ENCODE measurements at regions of chr7 and their contacts with region 1.

Region 1: GRCh38 chr7:66033471-66034385 is 41.9 kb upstream of the ASL start:
- DNase-seq: no peak
- ATAC-seq: no peak
- H3K4me3 ChIP-seq: no peak overlapping the region
- H3K27ac ChIP-seq: no peak overlapping the region
- H3K4me1 ChIP-seq: peaks cover 0 to 4% of the 10 kb centered on the region in 2 experiments; a peak in 1 of 4 replicates
- H3K27me3 ChIP-seq: no peaks in the 10 kb centered on the region
- CTCF ChIP-seq: no peak
- POLR2A ChIP-seq: no peak
- RAD21 ChIP-seq: no peak

Region 2: DNA sequence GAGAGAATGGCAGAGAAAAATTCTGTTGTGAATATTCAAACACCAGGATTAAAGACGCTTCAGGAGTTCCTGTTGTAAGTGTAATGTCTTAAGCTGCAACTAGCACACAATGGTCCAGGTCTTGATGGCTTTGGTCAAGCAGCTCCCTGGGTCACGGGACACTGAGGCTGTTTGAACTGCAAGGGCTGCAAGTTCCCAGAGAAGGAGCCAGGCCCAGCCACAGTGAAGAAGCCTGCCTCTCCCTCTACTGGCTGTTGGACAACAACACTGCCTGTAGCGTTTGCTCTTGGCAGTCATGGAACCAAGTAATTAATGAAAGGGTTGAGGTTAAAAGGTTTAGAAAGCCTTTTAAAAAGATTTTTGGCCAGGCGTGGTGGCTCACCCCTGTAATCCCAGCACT is 19.8 kb before region 1 on chr7:
- CTCF ChIA-PET with region 1: no interaction called
- POLR2A ChIA-PET with region 1: no interaction called
- RAD21 ChIA-PET with region 1: no interaction called
- intact Hi-C with region 1: loop called (anchors 1 kb)
- DNase-seq: peak; percentile 26
- ATAC-seq: peak; percentile 81
- H3K4me3 ChIP-seq: no peak overlapping the region
- H3K27ac ChIP-seq: no peak overlapping the region
- H3K4me1 ChIP-seq: peaks cover 4 to 12% of the 10 kb centered on the region in 2 experiments; a peak in 2 of 4 replicates
- H3K27me3 ChIP-seq: no peaks in the 10 kb centered on the region
- CTCF ChIP-seq: peak; percentile 28 to 41 (median 32); a peak in 4 of 6 replicates
- POLR2A ChIP-seq: no peak
- RAD21 ChIP-seq: peak; percentile 55; the same call in 1 of the 2 replicates

Region 3: GRCh38 chr7:66150471-66150870 is 116.7 kb after region 1 on chr7:
- CTCF ChIA-PET with region 1: no interaction called
- POLR2A ChIA-PET with region 1: no interaction called
- RAD21 ChIA-PET with region 1: interaction called in 1 of 2 experiments, 3 read pairs
- intact Hi-C with region 1: loop called (anchors 10 kb)
- DNase-seq: no peak
- ATAC-seq: no peak
- H3K4me3 ChIP-seq: no peak overlapping the region
- H3K27ac ChIP-seq: peak overlapping the region; percentile 33; the same call in 1 of the 2 replicates
- H3K4me1 ChIP-seq: peaks cover 62 to 85% of the 10 kb centered on the region in 2 experiments
- H3K27me3 ChIP-seq: no peaks in the 10 kb centered on the region
- CTCF ChIP-seq: no peak
- POLR2A ChIP-seq: no peak
- RAD21 ChIP-seq: no peak